ENCODE measurements at regions of chr12 and their contacts with region 1.

Region 1: DNA sequence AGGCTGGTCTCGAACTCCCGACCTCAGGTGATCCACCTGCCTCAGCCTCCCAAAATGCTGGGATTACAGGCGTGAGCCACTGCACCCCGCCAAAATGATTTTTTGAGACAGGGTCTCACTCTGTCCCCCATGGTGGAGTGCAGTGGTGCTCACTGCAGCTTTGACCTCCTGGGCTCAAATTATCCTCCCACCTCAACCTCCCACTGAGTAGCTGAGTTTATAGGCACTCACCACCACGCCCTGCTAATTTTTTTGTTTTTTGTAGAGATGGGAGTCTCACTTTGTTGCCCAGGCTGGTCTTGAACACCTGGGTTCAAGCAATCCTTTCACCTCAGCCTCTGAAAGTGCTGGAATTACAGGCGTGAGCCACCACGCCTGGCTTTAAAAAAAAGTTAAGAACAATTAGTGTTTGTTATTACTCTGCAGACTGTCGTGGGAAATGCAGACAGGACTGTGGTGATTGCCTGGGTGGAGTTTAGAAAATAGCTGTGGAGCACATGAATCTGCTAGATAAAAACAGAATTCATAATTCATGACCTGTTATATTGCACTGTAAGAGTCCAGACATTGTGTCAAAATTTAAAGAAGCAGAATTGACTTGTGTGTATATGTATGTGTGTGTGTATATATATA is 9.2 kb upstream of the COX6A1 start:
- DNase-seq: no peak
- ATAC-seq: no peak
- H3K4me3 ChIP-seq: no peak overlapping the region
- H3K27ac ChIP-seq: no peak overlapping the region
- H3K4me1 ChIP-seq: no peaks in the 10 kb centered on the region
- H3K27me3 ChIP-seq: no peaks in the 10 kb centered on the region

Region 2: DNA sequence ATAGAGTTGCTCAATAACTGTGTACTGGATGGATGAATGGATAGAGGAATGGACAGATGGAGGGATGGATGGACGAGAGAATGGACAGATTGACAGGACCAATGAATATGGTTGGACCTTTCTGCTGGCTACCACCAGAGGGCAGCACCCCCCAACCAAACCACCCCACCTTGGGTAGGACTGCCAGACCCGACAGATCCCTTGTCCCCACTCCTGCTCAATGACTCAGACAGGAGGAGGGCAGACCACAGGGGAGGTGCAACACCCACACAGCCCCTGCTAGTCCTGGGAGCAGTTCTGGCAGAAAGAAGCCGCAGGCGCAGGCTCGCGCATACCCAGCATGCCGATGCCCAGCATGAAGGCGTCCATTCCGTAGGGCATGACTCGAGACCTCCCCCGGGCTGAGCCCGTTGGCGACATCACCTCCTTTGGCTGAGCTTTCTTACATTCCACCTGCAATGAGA is 72.1 kb before region 1 on chr12:
- intact Hi-C with region 1: loop called (anchors 5 kb)
- DNase-seq: peak; percentile 83 to 90
- ATAC-seq: peak; percentile 79
- H3K4me3 ChIP-seq: no peak overlapping the region
- H3K27ac ChIP-seq: no peak overlapping the region
- H3K4me1 ChIP-seq: no peaks in the 10 kb centered on the region
- H3K27me3 ChIP-seq: no peaks in the 10 kb centered on the region